Sigmoid colon (tissue), 7 donors: ENCODE measurements at regions of chr22 and their contacts with region 1.

Region 1: DNA sequence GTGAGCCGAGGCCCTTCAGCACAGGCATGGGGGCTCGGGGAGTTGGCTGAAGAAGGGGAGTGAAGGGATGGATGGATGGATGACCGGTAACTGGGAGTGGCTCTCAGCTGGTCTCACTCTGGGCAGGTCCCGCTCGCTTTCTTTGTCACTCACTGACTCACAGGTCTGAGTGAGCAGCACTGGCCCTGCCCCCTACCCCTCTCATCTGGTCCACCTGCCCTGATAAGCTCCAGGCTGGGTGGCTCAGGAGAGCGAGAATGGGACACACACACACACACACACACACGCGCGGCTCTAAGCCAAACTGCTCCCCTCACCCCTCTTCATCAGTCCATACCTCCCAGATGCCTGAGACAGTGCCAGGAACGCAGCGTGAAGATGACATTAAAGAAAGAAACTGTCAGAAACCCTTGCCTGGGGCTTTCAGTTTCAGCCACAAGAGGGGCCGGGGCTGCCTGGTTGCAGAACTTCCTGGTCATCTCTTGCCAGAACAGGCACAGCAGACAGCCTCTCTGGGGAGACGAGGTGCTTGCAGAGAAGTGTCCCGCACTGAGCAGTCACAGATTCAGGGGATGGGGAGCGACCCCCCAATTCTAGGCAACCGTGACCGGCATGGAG is 16.5 kb upstream of the SHISAL1 start:
- DNase-seq: peak; percentile 64
- H3K4me3 ChIP-seq: no peak overlapping the region
- H3K27ac ChIP-seq: peak overlapping the region in 2 of 4 donors; percentile 65 to 68
- H3K4me1 ChIP-seq: peaks cover 0 to 52% (median 39%) of the 10 kb centered on the region in 4 donors
- H3K27me3 ChIP-seq: peaks cover 0 to 4% (median 3%) of the 10 kb centered on the region in 3 donors
- CTCF ChIP-seq: no peak
- EP300 ChIP-seq: no peak
- POLR2A ChIP-seq: no peak

Region 2: GRCh38 chr22:43993027-43993760 is 336.1 kb before region 1 on chr22:
- intact Hi-C with region 1: loop called (anchors 10 kb)
- DNase-seq: peak; percentile 65
- H3K4me3 ChIP-seq: no peak overlapping the region
- H3K27ac ChIP-seq: no peak overlapping the region
- H3K4me1 ChIP-seq: peaks cover 0 to 8% (median 0%) of the 10 kb centered on the region in 4 donors
- H3K27me3 ChIP-seq: no peaks in the 10 kb centered on the region
- CTCF ChIP-seq: peak; percentile 90 to 95 (median 92)
- EP300 ChIP-seq: no peak
- POLR2A ChIP-seq: no peak

Region 3: DNA sequence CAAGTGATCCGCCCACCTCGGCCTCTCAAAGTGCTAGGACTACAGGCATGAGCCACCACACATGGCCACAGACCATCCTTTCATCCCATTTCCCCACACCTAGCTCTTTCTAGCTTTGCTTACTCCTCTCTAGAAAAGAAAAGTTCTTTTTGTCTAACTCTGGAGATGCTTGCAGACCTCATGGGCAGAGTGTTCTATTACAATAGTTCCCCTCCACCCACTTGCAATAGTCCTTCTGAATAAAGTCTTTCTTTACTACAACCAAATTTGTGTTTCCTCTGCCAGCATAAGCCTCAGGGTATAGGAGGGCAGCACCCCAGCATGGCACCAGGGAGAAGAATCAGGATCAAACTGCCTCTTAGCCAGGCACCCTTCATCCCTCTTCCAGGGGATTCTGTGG is 187.6 kb after region 1 on chr22:
- intact Hi-C with region 1: no loop called
- DNase-seq: no peak
- H3K4me3 ChIP-seq: no peak overlapping the region
- H3K27ac ChIP-seq: no peak overlapping the region
- H3K4me1 ChIP-seq: no peaks in the 10 kb centered on the region
- H3K27me3 ChIP-seq: no peaks in the 10 kb centered on the region
- CTCF ChIP-seq: no peak
- EP300 ChIP-seq: no peak
- POLR2A ChIP-seq: no peak

Region 4: GRCh38 chr22:44625981-44626687 is 296.8 kb after region 1 on chr22:
- intact Hi-C with region 1: loop called (anchors 10 kb)
- DNase-seq: peak; percentile 83
- H3K4me3 ChIP-seq: no peak overlapping the region
- H3K27ac ChIP-seq: no peak overlapping the region
- H3K4me1 ChIP-seq: peaks cover 0 to 4% (median 0%) of the 10 kb centered on the region in 4 donors
- H3K27me3 ChIP-seq: peaks cover 0 to 15% (median 9%) of the 10 kb centered on the region in 3 donors
- CTCF ChIP-seq: peak; percentile 98 to 100 (median 99)
- EP300 ChIP-seq: no peak
- POLR2A ChIP-seq: no peak